ENCODE measurements at regions of chr10 and their contacts with region 1.

Region 1: DNA sequence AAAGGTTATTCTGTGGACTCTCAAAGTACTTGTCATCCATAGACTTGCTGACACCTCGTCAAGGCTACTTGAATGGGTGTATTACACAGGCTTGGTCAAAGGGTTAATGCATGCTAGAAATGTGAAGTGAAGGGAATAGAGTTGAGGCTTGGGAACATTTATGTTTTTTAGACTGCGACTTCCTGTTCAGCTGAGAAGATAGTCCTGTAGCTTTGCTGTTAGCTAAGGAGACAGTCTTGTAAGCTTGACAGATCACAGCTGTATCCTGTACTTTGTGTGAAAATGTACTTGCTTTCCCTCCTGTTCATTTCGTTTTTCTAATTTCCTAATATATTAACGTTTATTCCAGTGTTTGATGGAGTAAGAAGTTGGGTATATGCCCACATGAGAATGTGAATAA is 52.1 kb downstream of the ADD3 start:
- DNase-seq: no peak
- CTCF ChIP-seq: no peak

Region 2: DNA sequence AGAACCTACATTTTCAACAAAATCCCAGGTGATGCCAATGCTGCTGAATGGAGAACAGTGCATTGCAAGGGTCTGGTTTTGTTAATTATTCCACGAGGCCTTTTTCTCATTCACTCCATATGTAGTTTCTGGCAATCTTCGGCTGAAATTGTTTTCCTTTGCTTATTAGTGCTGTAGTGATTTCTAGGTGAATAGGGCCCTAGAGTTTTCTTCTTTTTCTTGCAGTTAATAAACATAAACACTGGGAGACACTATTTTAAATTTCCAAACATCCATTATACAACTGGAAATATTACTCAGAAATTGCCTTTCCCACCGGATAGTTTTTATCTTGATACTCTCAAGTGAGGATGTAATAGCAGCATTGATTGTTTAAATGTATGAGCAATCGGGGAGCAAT is 572.2 kb before region 1 on chr10:
- CTCF ChIA-PET with region 1: no interaction called
- POLR2A ChIA-PET with region 1: no interaction called
- DNase-seq: no peak
- CTCF ChIP-seq: no peak

Region 3: GRCh38 chr10:110045772-110046171 is 14.2 kb before region 1 on chr10:
- CTCF ChIA-PET with region 1: interaction called, 13 read pairs
- POLR2A ChIA-PET with region 1: no interaction called
- DNase-seq: no peak
- CTCF ChIP-seq: no peak

Measured in GM10248 (cell line).